ENCODE measurements at regions of chr19 and their contacts with region 1.

Region 1: GRCh38 chr19:12847159-12848139 is 9.1 kb downstream of the MAST1 start:
- DNase-seq: peak in 1 of 2 experiments; percentile 100
- H3K4me3 ChIP-seq: peak overlapping the region in 2 of 4 experiments; percentile 26 to 47; a peak in 4 of 8 replicates
- H3K27ac ChIP-seq: no peak overlapping the region
- H3K4me1 ChIP-seq: peaks cover 0 to 10% (median 3%) of the 10 kb centered on the region in 4 experiments; a peak in 5 of 7 replicates
- H3K27me3 ChIP-seq: no peaks in the 10 kb centered on the region
- CTCF ChIP-seq: peak; percentile 96 to 99 (median 99)
- EP300 ChIP-seq: no peak
- POLR2A ChIP-seq: no peak
- RAD21 ChIP-seq: peak; percentile 92 to 94

Region 2: DNA sequence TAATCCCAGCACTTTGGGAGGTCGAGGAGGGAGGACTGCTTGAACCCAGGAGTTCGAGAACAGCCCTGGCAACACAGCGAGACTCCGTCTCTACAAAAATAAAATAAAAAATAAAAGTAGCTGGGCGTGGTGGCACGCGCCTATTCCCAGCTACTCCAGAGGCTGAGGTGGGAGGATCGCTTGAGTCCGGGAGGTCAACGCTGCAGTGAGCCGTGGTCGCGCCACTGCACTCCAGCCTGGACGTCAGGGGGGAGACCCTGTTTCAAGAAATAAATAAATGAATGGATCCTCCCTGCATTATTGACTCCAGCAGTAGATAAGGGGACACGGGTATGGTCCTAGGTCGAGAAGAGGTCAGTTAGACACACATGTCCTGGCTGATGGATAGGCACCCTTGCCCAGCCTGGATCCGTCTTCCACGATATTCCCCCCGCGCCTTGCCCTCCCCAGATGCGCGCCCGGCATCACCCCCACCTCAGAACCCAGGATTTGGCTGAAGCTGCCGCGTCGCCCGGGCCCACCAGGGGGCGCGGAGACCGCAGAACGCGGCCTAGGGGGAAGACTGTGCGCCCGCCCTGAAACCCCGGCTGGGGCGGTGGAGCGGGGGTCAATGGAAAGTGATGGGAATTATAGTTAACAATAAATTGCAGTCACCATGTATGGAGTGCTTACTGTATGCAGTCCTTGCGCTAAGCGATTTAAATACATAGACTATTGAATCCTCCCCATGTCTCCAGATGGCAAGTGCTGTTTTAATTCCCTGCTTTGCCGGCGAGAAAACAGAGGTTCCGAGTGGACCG is 70.0 kb before region 1 on chr19:
- CTCF ChIA-PET with region 1: interaction called, 26 read pairs
- POLR2A ChIA-PET with region 1: interaction called, 6 read pairs
- DNase-seq: peak in 1 of 2 experiments; percentile 95
- H3K4me3 ChIP-seq: peak overlapping the region; percentile 40 to 69 (median 62)
- H3K27ac ChIP-seq: no peak overlapping the region
- H3K4me1 ChIP-seq: peaks cover 0 to 22% (median 17%) of the 10 kb centered on the region in 4 experiments; a peak in 6 of 7 replicates
- H3K27me3 ChIP-seq: no peaks in the 10 kb centered on the region
- CTCF ChIP-seq: peak; percentile 81 to 92 (median 81)
- EP300 ChIP-seq: peak in 1 of 2 experiments; percentile 41; a peak in 1 of 3 replicates
- POLR2A ChIP-seq: no peak
- RAD21 ChIP-seq: peak; percentile 74 to 84

Region 3: GRCh38 chr19:12806239-12807081 is 41.0 kb before region 1 on chr19 and contains the start of gene RNASEH2A:
- CTCF ChIA-PET with region 1: interaction called, 11 read pairs
- POLR2A ChIA-PET with region 1: interaction called, 6 read pairs
- DNase-seq: peak in 1 of 2 experiments; percentile 91
- H3K4me3 ChIP-seq: peak within 1 kb of the TSS; percentile 78 to 87 (median 80)
- H3K27ac ChIP-seq: peak within 1 kb of the TSS; percentile 33; the same call in 1 of the 2 replicates
- H3K4me1 ChIP-seq: peaks cover 0 to 14% (median 9%) of the 10 kb centered on the region in 4 experiments; a peak in 6 of 7 replicates
- H3K27me3 ChIP-seq: peaks cover 0 to 4% (median under 1%) of the 10 kb centered on the region in 4 experiments; a peak in 2 of 7 replicates
- CTCF ChIP-seq: no peak
- EP300 ChIP-seq: no peak
- POLR2A ChIP-seq: peak in 1 of 2 experiments; percentile 83; a peak in 1 of 3 replicates
- RAD21 ChIP-seq: no peak
- total RNA-seq, gene RNASEH2A: 67.5 and 67.9 TPM in 2 replicates

Region 4: DNA sequence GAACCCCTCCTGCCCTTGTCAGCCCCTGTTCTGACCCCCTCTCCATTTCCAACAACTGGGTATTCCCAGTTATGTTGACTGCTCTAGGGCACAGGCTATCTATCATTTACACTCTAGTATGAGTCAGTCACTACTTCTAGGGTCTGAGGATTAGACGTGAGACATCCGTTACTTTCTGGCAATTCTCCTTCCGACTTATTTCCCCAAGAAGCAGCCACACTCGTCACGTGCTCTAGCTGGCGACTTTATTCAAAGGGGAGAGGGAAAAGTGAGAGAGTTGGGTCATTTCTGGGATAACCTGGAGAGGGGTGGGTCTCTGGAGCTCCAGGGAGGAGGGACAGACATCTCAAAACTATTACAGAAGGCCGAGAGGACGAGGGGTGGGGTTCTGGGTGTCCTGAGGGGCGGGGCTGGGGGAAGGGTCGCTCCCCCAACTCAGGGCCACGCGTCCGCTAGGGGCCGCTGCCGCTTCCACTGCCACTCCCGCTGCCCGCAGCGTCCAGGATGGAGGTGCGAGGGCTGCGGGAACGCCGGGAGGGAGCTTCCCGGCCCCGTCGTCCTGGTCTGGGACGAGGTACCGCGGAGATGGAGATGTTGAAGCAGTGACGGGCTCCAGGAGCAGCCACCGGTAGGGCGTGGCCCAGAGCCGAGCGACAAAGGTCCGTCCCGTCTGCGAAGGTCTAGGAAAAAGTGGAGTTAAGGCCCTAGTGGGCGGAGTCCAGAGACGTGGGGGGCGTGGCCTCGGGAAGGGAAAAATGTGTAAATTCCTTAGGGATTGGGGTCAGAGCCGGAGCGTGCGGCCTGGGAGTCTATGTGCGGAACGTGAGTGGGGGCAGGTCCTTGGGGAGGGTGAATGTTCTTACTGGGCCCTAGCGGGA is 22.0 kb before region 1 on chr19:
- CTCF ChIA-PET with region 1: interaction called, 89 read pairs
- POLR2A ChIA-PET with region 1: interaction called, 12 read pairs
- DNase-seq: peak in 1 of 2 experiments; percentile 98
- H3K4me3 ChIP-seq: peak overlapping the region; percentile 42 to 64 (median 55)
- H3K27ac ChIP-seq: peak overlapping the region; percentile 26; the same call in 1 of the 2 replicates
- H3K4me1 ChIP-seq: peaks cover 0 to 8% (median 4%) of the 10 kb centered on the region in 4 experiments; a peak in 4 of 7 replicates
- H3K27me3 ChIP-seq: no peaks in the 10 kb centered on the region
- CTCF ChIP-seq: peak; percentile 76 to 81 (median 77)
- EP300 ChIP-seq: no peak
- POLR2A ChIP-seq: peak in 1 of 2 experiments; percentile 65; a peak in 1 of 3 replicates
- RAD21 ChIP-seq: peak; percentile 25 to 46; a peak in 2 of 4 replicates

Region 5: DNA sequence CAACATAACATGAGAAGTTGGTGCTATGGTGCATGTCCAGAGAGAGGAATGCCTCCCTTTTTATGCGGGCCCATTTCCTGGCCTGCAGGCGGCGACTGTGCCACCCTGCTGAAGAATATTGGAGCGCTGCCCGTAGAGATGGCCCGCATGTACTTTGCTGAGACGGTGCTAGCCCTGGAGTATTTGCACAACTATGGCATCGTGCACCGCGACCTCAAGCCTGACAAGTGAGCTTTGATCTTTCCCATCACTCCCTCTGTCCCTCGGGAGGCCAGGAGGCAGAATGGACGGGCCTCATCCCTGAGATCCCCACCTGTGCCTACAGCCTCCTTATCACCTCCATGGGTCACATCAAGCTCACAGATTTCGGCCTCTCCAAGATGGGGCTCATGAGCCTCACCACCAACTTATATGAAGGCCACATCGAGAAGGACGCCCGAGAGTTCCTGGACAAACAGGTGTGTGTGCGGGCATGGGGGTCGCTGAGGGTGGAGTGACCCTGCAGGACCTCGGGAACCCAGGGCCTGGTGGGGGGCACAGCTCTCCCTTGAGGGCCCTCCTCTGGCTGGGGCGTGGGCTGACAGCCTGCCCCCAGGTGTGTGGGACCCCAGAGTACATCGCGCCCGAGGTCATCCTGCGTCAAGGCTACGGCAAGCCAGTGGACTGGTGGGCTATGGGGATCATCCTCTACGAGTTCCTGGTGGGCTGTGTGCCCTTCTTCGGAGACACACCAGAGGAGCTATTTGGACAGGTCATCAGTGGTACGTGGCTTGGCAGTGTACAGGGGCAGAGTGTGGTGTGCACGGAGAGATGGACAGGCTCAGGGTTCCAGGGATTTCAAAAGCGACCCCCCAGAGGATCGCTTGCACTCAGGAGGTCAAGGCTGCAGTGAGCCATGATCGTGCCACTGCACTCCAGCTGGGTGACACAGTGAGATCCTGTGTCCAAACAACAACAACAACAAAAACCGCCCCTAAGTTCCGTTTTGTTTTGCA is 17.6 kb after region 1 on chr19:
- CTCF ChIA-PET with region 1: interaction called, 48 read pairs
- POLR2A ChIA-PET with region 1: interaction called, 21 read pairs
- DNase-seq: no peak
- H3K4me3 ChIP-seq: no peak overlapping the region
- H3K27ac ChIP-seq: no peak overlapping the region
- H3K4me1 ChIP-seq: peaks cover 3 to 17% (median 14%) of the 10 kb centered on the region in 4 experiments
- H3K27me3 ChIP-seq: no peaks in the 10 kb centered on the region
- CTCF ChIP-seq: no peak
- EP300 ChIP-seq: no peak
- POLR2A ChIP-seq: no peak
- RAD21 ChIP-seq: no peak

Region 6: GRCh38 chr19:12945479-12946091 is 98.1 kb after region 1 on chr19 and contains the start of gene RAD23A:
- CTCF ChIA-PET with region 1: no interaction called
- POLR2A ChIA-PET with region 1: no interaction called
- DNase-seq: peak; percentile 96 to 99
- H3K4me3 ChIP-seq: peak within 1 kb of the TSS; percentile 77 to 93 (median 90)
- H3K27ac ChIP-seq: peak within 1 kb of the TSS; percentile 96
- H3K4me1 ChIP-seq: peaks cover 0 to 3% (median under 1%) of the 10 kb centered on the region in 4 experiments; a peak in 1 of 7 replicates
- H3K27me3 ChIP-seq: no peaks in the 10 kb centered on the region
- CTCF ChIP-seq: peak in 1 of 3 experiments; percentile 2; a peak in 1 of 4 replicates
- EP300 ChIP-seq: no peak
- POLR2A ChIP-seq: peak; percentile 98
- RAD21 ChIP-seq: no peak
- total RNA-seq, gene RAD23A: 73.3 and 76.1 TPM in 2 replicates